ENCODE measurements at regions of chrX and their contacts with region 1.

Region 1: DNA sequence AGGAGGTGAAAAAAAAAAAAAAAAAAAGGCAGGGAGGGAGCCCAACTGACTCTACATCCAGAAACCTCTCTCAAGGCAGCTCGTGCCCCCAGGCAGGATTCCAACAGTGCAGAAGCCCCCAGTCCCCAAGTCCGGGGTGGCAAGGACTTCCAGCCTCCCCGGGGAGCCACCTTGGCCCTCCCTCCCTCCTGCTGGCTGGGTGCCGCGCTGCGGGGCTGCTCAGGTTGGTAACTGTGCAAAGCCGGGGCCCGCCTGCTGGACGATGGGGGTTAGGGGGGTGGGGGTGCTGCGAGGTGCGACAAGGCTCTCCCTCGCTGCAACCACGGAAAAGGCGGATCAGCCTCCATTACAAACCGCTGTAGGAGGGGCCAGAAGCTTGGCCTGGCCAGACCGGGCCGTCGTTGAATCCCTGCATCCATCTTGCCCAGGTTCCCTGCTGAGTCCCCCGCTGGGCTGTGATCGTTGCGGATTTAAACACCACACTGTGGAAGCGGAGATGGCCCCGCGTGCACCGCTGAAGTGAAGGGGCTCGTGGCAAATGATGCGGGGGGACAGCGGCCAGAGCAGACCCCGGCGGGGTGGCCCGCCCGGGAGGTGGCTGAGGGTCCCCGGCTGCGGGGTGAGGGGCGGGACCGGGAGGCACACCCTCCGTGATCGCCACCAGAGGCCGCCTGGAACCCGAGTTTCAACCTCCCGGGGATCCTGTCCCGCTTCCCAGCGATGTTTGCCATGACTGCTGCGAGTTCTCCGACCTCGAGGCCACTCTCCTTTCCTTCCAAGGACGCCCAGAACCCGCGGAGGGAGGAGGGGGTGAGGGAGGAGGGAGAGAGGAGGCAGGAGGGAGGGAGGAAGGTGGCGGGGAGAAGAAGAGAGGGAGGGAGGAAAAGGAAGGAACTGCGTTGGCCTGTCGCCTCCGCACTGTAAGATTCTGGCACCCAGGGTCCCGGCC is 58.0 kb upstream of the DDX3X start:
- DNase-seq: peak in 8 of 9 donors; percentile 12 to 50 (median 43)
- ATAC-seq: peak; percentile 76
- H3K4me3 ChIP-seq: peak overlapping the region; percentile 64
- H3K4me3 Mint-ChIP-seq: peak overlapping the region; percentile 75 to 88 (median 82)
- H3K27ac ChIP-seq: peak overlapping the region; percentile 35
- H3K27ac Mint-ChIP-seq: peak overlapping the region in 8 of 9 donors; percentile 36 to 85 (median 70)
- H3K4me1 ChIP-seq: no peaks in the 10 kb centered on the region
- H3K4me1 Mint-ChIP-seq: peaks cover 0 to 16% (median 10%) of the 10 kb centered on the region in 7 donors
- H3K27me3 ChIP-seq: no peaks in the 10 kb centered on the region
- H3K27me3 Mint-ChIP-seq: peaks cover 0 to 2% (median 0%) of the 10 kb centered on the region in 5 donors

Region 2: DNA sequence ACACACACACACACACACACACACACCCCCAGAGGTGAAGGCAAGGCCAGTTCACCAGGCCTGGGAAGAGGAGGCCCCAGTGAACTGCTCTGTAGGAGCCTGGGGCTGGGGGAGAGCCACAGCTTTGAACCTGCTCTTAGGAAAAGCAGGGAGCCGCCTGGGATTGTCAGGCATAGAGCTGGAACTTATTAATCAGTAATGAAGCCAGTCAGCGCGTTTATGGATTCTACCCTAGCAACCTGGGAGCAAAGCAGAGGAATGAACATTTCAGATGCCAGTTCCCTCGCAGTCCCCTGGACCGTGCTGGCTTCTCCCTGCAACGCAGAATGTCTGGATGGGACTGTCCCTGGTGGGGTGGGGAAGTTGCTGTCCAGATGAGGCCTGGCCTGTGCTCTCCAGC is 12.7 kb after region 1 on chrX:
- CTCF ChIA-PET with region 1: no interaction called
- POLR2A ChIA-PET with region 1: no interaction called
- intact Hi-C with region 1: no loop called
- DNase-seq: no peak
- ATAC-seq: no peak
- H3K4me3 ChIP-seq: no peak overlapping the region
- H3K4me3 Mint-ChIP-seq: no peak overlapping the region
- H3K27ac ChIP-seq: no peak overlapping the region
- H3K27ac Mint-ChIP-seq: no peak overlapping the region
- H3K4me1 ChIP-seq: no peaks in the 10 kb centered on the region
- H3K4me1 Mint-ChIP-seq: peaks cover 0 to 2% (median 0%) of the 10 kb centered on the region in 7 donors
- H3K27me3 ChIP-seq: no peaks in the 10 kb centered on the region
- H3K27me3 Mint-ChIP-seq: no peaks in the 10 kb centered on the region

Region 3: DNA sequence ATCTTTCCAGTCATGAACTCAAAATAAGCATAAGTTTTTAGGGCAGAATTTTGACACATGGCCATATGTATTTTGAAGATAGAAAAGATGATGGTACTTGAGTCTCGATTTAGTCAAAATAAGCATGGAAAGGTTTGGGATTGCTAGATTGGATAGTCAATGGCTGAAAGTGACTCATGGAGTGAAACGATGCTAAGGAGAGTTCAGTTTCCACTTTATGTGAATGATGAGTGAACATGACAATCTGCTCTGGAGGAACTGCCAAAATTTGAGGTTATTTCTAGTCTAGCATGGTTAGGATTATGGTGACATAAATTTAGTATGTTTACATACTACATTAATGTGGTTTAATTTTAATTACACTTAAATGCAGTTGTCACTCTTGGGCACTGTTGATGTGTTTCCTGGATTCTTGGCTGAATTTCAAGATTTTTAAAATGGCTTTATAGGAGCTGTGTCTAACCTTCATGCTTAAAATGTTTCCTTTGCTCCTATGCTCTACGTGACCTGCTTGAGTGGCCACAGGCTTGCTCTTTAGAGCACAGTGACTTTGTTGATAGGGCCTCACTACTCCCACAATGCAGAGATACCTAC is 75.1 kb after region 1 on chrX:
- CTCF ChIA-PET with region 1: no interaction called
- POLR2A ChIA-PET with region 1: no interaction called
- intact Hi-C with region 1: loop called in 1 of 2 experiments (anchors 5 kb)
- DNase-seq: no peak
- ATAC-seq: peak; percentile 45
- H3K4me3 ChIP-seq: no peak overlapping the region
- H3K4me3 Mint-ChIP-seq: peak overlapping the region in 3 of 10 donors; percentile 2 to 11 (median 8)
- H3K27ac ChIP-seq: no peak overlapping the region
- H3K27ac Mint-ChIP-seq: peak overlapping the region in 8 of 9 donors; percentile 44 to 93 (median 74)
- H3K4me1 ChIP-seq: peaks cover 0 to 11% of the 10 kb centered on the region in 2 donors
- H3K4me1 Mint-ChIP-seq: peaks cover 5 to 56% (median 37%) of the 10 kb centered on the region in 7 donors
- H3K27me3 ChIP-seq: no peaks in the 10 kb centered on the region
- H3K27me3 Mint-ChIP-seq: no peaks in the 10 kb centered on the region

Region 4: GRCh38 chrX:41759817-41760216 is 483.9 kb after region 1 on chrX:
- CTCF ChIA-PET with region 1: no interaction called
- POLR2A ChIA-PET with region 1: no interaction called
- intact Hi-C with region 1: loop called (anchors 1 to 10 kb)
- DNase-seq: peak in 1 of 9 donors; percentile 4
- ATAC-seq: no peak
- H3K4me3 ChIP-seq: no peak overlapping the region
- H3K4me3 Mint-ChIP-seq: no peak overlapping the region
- H3K27ac ChIP-seq: no peak overlapping the region
- H3K27ac Mint-ChIP-seq: no peak overlapping the region
- H3K4me1 ChIP-seq: no peaks in the 10 kb centered on the region
- H3K4me1 Mint-ChIP-seq: peaks cover 0 to 28% (median 10%) of the 10 kb centered on the region in 7 donors
- H3K27me3 ChIP-seq: no peaks in the 10 kb centered on the region
- H3K27me3 Mint-ChIP-seq: no peaks in the 10 kb centered on the region